ENCODE measurements at regions of chr2 and their contacts with region 1.

Region 1: GRCh38 chr2:182077451-182078142 is 91.9 kb downstream of the PPP1R1C start:
- DNase-seq: peak; percentile 88
- H3K4me3 ChIP-seq: no peak overlapping the region
- H3K27ac ChIP-seq: no peak overlapping the region
- H3K4me1 ChIP-seq: no peaks in the 10 kb centered on the region; the same call in 1 of the 2 replicates
- H3K27me3 ChIP-seq: no peaks in the 10 kb centered on the region

Region 2: GRCh38 chr2:181077128-181077709 is 1000.4 kb before region 1 on chr2:
- in situ Hi-C with region 1: loop called (anchors 25 kb)
- DNase-seq: peak; percentile 64
- H3K4me3 ChIP-seq: no peak overlapping the region
- H3K27ac ChIP-seq: no peak overlapping the region
- H3K4me1 ChIP-seq: peaks cover 22% of the 10 kb centered on the region
- H3K27me3 ChIP-seq: no peaks in the 10 kb centered on the region

Region 3: GRCh38 chr2:181374781-181375675 is 702.6 kb before region 1 on chr2:
- in situ Hi-C with region 1: no loop called
- DNase-seq: peak; percentile 67
- H3K4me3 ChIP-seq: peak overlapping the region; percentile 8; the same call in 1 of the 2 replicates
- H3K27ac ChIP-seq: no peak overlapping the region
- H3K4me1 ChIP-seq: peaks cover 29% of the 10 kb centered on the region
- H3K27me3 ChIP-seq: no peaks in the 10 kb centered on the region

Region 4: DNA sequence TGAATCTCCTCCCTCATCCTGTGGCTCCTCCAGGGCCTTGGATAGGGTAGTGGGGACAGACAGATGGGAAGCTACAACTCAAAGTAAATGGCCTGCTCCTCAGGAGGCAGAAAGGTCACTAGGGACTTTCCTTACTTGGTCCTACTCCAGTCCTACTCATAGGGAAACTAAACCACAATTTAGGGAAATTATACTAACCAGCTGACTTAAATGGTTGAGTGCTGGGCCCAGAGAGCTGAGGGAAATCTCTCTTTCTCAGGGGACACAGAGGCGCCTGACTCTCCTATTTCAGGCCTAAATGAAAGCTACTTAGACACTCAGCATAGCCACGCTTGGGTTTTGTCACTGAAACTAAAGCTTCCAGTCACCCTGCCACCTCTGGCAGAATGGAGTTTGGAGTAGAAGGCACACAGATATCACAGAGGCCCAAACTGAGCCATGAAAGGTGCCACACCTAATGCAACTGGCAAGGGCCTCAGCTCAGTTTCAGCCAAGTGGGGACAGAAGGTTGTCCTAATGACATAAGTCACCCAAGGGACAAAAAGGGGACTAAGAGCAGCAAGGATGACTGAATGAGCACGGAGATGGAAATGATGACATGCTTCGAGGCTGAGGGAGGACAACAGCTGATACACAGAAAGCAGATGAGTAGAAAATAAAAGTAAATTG is 444.7 kb before region 1 on chr2:
- in situ Hi-C with region 1: no loop called
- DNase-seq: no peak
- H3K4me3 ChIP-seq: no peak overlapping the region
- H3K27ac ChIP-seq: no peak overlapping the region
- H3K4me1 ChIP-seq: no peaks in the 10 kb centered on the region
- H3K27me3 ChIP-seq: peaks cover 40% of the 10 kb centered on the region

Region 5: DNA sequence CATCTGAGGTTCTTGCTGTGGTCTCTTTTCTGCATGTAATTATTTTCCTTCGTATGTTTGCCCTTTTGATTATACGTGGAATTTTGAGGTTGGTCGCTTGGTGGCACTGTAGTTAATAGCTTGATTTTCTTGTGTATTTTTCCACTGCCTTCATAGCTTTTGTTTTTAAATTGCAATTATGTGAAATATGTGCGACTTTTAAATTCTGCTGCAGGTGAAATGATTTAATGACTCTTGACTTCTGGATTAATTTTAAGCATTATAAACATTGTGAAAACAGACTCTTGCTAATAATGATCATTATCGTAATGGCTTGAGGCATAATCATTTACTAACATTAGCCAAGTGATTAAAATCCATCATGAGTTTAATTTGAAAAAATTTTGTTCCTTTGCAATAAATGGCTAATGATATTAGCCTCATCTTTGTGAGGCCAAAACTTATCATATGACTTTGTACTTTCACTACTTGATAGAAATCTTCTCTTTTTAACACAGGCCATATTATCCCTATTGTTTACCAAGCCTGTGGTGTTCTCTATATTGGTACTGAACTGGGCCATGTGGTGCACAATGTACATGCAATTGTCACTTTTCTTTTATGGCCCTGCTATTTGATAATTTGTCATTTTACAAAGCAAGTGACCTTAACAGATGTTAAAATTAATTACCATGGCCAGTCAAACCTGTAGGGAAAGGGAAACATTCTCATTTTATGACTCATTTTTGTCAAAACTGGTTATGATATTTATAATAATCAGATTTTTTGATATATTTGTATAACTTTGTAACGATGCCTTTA is 334.5 kb before region 1 on chr2:
- in situ Hi-C with region 1: loop called (anchors 10 kb)
- DNase-seq: peak; percentile 74
- H3K4me3 ChIP-seq: no peak overlapping the region
- H3K27ac ChIP-seq: no peak overlapping the region
- H3K4me1 ChIP-seq: peaks cover 9% of the 10 kb centered on the region
- H3K27me3 ChIP-seq: no peaks in the 10 kb centered on the region

Region 6: DNA sequence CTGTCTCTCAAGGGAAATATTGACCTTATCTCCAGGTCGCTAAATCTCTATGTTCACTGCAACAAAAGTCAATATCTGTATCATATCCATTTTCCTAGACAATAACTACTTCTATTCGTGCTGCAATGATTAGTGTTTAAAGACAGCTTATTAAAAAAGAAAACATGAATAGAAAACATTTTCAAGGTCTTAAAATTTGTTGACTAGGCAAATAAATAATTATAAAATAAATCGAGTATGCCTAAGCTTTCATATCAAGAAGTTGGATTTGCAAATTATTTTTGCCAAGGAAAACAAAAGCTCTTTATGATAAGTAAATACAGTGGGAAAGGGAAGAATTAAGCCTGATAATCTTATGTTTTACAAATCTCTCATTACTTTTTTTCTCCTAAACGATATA is 1475.1 kb after region 1 on chr2:
- in situ Hi-C with region 1: no loop called
- DNase-seq: no peak
- H3K4me3 ChIP-seq: no peak overlapping the region
- H3K27ac ChIP-seq: no peak overlapping the region
- H3K4me1 ChIP-seq: no peaks in the 10 kb centered on the region
- H3K27me3 ChIP-seq: no peaks in the 10 kb centered on the region

Region 7: DNA sequence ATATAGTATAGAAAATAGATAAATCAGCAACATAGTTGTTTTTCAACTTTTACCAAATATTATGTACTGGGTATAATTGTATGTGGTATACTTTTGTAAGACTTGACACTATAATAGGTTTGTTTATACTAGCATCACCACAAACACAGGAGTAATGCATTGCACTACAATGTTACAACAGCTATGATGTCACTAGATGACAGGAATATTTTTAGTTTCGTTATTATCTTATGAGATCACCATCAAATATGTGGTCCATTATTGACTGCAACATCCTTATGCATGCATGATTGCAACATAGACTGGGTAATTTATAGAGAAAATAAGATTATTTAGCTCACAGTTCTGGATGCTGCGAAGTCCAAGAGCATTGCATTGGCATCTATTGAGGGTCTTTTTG is 1842.3 kb after region 1 on chr2:
- in situ Hi-C with region 1: no loop called
- DNase-seq: no peak
- H3K4me3 ChIP-seq: no peak overlapping the region
- H3K27ac ChIP-seq: no peak overlapping the region
- H3K4me1 ChIP-seq: no peaks in the 10 kb centered on the region
- H3K27me3 ChIP-seq: no peaks in the 10 kb centered on the region